ENCODE measurements at regions of chr4 and their contacts with region 1.

Region 1: GRCh38 chr4:118086344-118086743 is 52.1 kb downstream of the NDST3 start:
- DNase-seq: peak; percentile 77
- ATAC-seq: peak; percentile 77
- H3K4me3 Mint-ChIP-seq: no peak overlapping the region
- H3K27ac Mint-ChIP-seq: no peak overlapping the region
- H3K4me1 Mint-ChIP-seq: peaks cover 7% of the 10 kb centered on the region
- H3K27me3 Mint-ChIP-seq: no peaks in the 10 kb centered on the region
- CTCF ChIP-seq: no peak

Region 2: GRCh38 chr4:118180776-118181175 is 94.4 kb after region 1 on chr4:
- CTCF ChIA-PET with region 1: no interaction called
- POLR2A ChIA-PET with region 1: no interaction called
- intact Hi-C with region 1: no loop called
- DNase-seq: no peak
- ATAC-seq: no peak
- H3K4me3 Mint-ChIP-seq: no peak overlapping the region
- H3K27ac Mint-ChIP-seq: no peak overlapping the region
- H3K4me1 Mint-ChIP-seq: no peaks in the 10 kb centered on the region
- H3K27me3 Mint-ChIP-seq: no peaks in the 10 kb centered on the region
- CTCF ChIP-seq: no peak

Region 3: DNA sequence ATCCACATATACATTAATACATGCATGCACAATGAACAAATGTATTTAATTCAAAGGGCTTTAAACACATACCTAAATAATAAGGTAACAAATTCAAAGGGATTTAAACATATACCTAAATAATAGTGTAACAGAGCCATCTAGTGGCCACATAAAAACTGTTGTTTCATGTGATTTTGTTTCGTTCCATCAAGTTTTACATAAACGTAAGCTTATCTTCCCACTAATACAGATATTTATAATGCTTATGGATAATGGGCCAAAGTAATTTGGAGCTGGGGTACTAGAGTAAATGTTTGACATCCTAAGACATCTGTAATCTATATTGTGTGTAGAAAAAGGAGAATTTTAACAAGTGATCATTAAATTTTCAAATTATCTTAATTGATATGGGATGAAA is 184.1 kb after region 1 on chr4:
- CTCF ChIA-PET with region 1: no interaction called
- POLR2A ChIA-PET with region 1: no interaction called
- intact Hi-C with region 1: loop called (anchors 10 kb)
- DNase-seq: no peak
- ATAC-seq: no peak
- H3K4me3 Mint-ChIP-seq: no peak overlapping the region
- H3K27ac Mint-ChIP-seq: no peak overlapping the region
- H3K4me1 Mint-ChIP-seq: peaks cover 2% of the 10 kb centered on the region
- H3K27me3 Mint-ChIP-seq: peaks cover 4% of the 10 kb centered on the region
- CTCF ChIP-seq: peak; percentile 72